ENCODE measurements at regions of chr3 and their contacts with region 1.

Region 1: DNA sequence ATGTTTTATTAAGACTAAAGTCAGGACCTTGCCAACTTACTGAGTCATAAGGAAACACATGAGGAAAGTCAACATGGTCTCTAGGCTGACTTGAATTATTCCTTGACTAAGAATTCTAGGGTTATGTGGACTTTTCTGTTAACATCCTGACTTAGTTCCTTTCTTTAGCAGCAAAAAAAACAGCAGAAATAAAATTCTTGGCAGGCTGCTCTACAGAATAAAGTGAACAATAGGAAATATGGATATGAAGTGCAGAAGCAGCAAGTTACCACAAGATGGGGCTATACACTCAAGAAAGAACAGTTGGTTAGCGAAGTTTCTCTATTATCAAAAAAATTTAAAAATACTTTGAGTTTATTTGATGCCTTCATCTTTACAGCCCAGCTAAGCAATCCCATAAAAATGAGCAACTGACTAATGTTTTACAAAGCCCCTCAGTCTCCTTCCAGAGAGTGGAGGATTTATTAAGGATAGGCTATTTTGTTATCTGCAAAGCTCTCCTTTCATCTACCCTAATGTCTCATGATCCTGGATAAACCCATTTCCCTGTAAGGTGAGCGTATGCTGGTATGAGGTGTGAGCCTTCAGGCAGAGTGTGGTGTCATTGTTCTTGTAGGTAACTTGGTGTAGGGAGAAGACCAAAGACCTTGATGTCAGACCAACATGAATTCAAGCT is 23.1 kb upstream of the MCCC1 start:
- DNase-seq: no peak
- ATAC-seq: peak; percentile 61
- H3K4me3 Mint-ChIP-seq: no peak overlapping the region
- H3K27ac Mint-ChIP-seq: no peak overlapping the region
- H3K4me1 Mint-ChIP-seq: peaks cover 2% of the 10 kb centered on the region
- H3K27me3 Mint-ChIP-seq: peaks cover 32% of the 10 kb centered on the region
- CTCF ChIP-seq: peak; percentile 76

Region 2: DNA sequence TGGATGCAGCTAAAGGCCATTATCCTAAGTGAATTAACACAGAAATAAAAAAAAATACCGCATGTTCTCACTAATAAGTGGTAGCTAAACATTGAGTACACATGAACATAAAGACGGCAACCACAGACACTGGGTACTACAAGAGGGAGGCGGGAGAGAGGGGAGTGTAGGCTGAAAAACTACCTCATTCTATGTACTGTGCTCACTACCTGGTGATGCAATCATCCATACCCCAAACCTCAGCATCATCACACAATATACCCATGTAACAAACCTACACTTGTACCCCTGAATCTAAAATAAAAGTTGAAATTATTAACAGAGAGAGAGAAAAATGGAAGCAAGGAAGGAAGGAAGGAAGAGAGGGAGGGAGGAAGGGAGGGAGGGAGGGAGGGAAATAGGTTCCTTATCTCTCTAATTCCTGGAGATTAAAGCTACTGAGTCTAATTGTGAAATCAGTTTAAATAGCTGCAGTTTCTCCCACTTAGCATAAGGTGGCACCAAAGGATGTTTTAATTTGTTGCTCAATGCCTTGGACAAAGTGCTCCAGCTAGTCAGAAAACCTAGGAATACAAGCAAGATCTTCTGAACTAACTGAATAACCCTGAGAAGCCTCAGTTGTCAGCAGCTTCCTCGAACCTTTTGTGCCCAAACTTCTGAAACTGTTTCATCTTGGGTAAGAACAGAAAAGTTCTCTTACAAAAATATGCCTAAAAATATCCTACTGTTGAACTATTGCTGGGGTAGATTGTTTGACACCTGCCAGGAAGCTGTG is 408.5 kb before region 1 on chr3:
- CTCF ChIA-PET with region 1: interaction called, 5 read pairs
- POLR2A ChIA-PET with region 1: no interaction called
- intact Hi-C with region 1: loop called (anchors 10 kb)
- DNase-seq: no peak
- ATAC-seq: peak; percentile 58
- H3K4me3 Mint-ChIP-seq: no peak overlapping the region
- H3K27ac Mint-ChIP-seq: no peak overlapping the region
- H3K4me1 Mint-ChIP-seq: peaks cover 5% of the 10 kb centered on the region
- H3K27me3 Mint-ChIP-seq: peaks cover 5% of the 10 kb centered on the region
- CTCF ChIP-seq: no peak

Region 3: GRCh38 chr3:182760576-182761164 is 361.7 kb before region 1 on chr3:
- CTCF ChIA-PET with region 1: no interaction called
- POLR2A ChIA-PET with region 1: no interaction called
- intact Hi-C with region 1: no loop called
- DNase-seq: no peak
- ATAC-seq: no peak
- H3K4me3 Mint-ChIP-seq: no peak overlapping the region
- H3K27ac Mint-ChIP-seq: no peak overlapping the region
- H3K4me1 Mint-ChIP-seq: no peaks in the 10 kb centered on the region
- H3K27me3 Mint-ChIP-seq: peaks cover 15% of the 10 kb centered on the region
- CTCF ChIP-seq: no peak

Region 4: DNA sequence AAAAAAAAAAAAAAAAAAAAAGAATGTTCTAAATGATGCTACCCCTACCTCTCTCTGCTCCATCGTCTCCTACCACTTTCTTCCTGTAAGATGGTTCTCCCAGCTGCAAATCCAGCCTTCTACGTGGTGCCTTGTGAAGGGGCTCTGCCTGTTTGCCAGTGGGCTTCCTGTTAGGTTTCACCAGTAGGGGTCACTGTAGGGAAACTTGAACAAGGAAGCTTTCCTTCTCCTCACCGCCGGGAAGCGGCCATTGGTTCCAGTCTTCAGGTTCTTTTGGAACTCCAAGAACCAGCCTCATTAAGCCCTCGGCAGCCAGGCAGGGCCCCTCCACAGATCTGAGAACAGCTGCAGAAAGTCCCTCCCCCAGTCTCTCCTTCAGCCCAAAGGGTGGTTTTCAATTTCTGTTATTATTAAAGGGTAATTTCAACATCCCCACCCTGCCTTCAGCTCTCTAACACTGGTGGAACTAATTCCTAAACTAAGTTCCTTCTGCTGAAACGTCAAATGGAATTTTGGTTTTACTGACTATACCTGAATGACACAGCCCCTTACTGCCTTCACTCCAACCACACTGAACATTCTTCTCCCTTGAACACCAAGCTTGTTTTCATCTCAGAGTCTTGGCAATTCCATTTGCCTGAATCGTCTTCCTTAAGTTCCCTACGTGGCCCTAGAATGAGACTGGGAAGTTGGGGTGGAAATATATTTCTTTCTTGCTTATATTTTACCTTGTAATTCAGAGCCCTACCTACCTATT is 36.6 kb before region 1 on chr3:
- CTCF ChIA-PET with region 1: no interaction called
- POLR2A ChIA-PET with region 1: no interaction called
- intact Hi-C with region 1: no loop called
- DNase-seq: no peak
- ATAC-seq: no peak
- H3K4me3 Mint-ChIP-seq: no peak overlapping the region
- H3K27ac Mint-ChIP-seq: no peak overlapping the region
- H3K4me1 Mint-ChIP-seq: no peaks in the 10 kb centered on the region
- H3K27me3 Mint-ChIP-seq: no peaks in the 10 kb centered on the region
- CTCF ChIP-seq: no peak

Region 5: DNA sequence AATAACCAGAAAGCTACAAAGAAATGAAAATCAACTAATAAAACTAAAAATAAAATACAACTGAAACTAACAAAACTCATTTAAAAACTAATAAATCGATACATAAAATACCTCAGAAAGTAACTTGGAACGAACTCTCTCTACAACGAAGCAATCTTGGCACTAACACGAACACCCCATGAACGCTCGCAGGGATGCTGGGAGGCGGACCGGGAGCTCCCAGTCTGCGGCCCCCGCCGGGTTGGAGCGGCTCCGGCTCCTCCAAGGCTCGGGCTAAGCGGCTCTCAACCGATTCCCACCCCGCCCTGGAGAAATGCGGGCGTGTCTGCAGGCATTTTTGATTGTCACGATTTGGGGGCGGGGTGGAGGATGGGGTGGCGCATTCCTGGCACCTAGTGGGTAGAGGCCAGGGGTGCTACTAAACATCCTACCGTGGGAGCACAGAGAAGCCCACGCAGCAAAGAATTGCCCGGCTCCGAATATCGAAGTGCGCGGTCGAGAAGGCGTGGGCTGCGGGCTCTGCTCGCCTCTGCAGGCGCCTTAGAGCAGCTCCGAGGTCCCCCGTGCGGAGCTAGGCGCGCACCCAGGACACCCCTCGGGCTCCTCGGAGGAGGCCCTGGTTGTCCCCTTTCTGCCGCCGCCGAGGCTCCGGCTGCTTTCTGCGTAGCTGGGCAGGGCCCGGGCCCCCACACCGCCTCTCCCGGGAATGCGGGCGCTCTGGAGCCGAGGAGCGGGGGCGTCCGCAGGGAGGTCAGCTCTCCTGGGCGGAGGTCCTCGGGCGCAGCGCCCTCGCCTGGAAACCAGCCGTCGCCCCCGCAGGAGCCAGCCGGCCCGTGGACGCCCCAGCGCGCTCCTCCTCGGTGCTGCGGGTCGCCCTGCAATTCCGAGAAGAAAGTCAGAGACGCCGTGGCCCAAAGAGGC is 56.5 kb after region 1 on chr3:
- CTCF ChIA-PET with region 1: interaction called, 28 read pairs
- POLR2A ChIA-PET with region 1: no interaction called
- intact Hi-C with region 1: loop called (anchors 1 kb)
- DNase-seq: no peak
- ATAC-seq: peak; percentile 61
- H3K4me3 Mint-ChIP-seq: peak overlapping the region; percentile 46
- H3K27ac Mint-ChIP-seq: no peak overlapping the region
- H3K4me1 Mint-ChIP-seq: peaks cover 12% of the 10 kb centered on the region
- H3K27me3 Mint-ChIP-seq: peaks cover 60% of the 10 kb centered on the region
- CTCF ChIP-seq: no peak

Region 6: DNA sequence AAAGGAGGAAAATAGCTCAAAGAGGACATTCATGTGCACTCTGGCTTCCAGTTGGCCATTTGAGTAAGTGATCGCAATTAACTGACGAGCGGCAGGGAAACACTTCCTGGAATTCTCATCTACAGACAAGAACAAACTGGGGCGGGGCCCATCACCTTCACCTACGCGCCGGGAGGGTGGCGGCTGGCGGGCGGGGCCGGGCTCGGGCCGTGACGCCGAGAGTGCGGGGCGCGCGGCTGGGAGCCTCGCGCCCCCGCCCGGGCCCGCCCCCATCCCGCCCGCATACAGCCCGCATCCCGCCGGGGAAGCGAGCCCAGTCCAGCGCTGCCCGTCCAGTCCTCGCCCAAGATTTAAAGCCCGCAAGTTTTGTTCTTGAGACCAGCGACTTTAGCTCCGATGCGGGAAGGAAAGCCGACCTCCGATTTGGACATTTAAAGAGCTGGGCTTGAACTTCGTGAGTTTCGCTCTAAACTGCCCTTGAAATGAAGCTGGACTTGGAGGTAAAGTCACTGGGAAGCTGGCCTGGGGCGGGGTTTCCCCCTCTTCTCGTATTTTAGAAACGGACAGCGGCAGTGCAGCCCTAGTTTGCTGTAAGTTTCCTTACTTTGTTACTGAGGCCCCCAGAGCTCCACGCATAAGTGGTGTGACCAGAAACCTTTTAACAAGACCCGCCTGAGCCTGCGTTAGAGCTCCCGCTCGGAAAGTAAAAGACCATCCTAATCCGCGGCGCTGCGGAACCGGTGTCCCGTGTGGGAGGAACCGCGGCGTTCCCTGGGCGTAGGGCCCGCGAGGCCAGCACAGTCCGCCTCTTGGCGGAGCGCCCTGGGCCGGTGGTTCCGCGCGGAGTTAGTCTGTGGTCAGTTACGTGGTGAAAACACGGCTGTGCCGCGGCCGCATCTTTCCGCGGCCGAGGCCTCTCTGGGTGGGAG is 130.8 kb after region 1 on chr3 and contains the start of gene B3GNT5:
- CTCF ChIA-PET with region 1: interaction called, 3 read pairs
- POLR2A ChIA-PET with region 1: no interaction called
- intact Hi-C with region 1: loop called (anchors 10 kb)
- DNase-seq: peak; percentile 35
- ATAC-seq: peak; percentile 59
- H3K4me3 Mint-ChIP-seq: peak within 1 kb of the TSS; percentile 78
- H3K27ac Mint-ChIP-seq: no peak within 1 kb of the TSS
- H3K4me1 Mint-ChIP-seq: peaks cover 4% of the 10 kb centered on the region
- H3K27me3 Mint-ChIP-seq: peaks cover 40% of the 10 kb centered on the region
- CTCF ChIP-seq: no peak
- total RNA-seq, gene B3GNT5: 0.37 and 0.38 TPM in 2 replicates

Region 7: DNA sequence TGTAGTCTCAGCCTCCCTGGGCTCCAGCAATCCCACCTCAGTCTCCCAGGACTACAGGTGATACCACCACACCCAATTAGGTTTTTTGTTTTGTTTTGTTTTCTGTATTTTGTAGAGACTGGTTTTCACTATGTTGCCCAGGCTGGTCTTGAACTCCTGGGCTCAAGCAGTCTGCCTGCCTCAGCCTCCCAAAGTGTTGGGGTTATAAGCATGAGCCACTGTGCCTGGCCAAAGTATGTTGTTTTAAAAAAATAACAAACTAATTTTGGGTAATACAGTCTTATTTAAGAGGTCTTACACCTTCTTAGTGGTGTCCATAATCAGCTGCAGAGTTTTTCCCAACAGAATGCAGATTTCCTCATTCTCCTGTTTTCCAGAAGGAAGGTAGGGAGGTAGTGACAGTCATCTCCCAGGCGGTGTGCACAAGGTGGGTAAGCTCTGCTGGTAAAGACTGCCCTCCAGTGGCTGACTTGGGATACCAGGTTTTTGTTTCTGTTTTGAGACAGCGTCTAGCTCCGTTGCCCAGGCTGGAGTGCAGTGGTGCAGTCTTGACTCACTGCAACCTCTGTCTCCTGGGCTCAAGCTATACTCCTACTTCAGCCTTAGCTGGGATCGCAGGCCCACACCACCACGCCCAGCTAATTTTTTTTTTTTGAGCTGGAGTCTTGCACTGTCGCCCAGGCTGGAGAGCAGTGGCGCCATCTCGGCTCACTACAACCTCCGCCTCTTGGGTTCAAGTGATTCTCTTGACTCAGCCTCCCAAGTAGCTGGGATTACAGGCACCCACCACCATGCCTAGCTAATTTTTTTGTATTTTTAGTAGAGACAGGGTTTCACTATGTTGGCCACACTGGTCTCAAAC is 644.6 kb after region 1 on chr3:
- CTCF ChIA-PET with region 1: interaction called, 7 read pairs
- POLR2A ChIA-PET with region 1: no interaction called
- intact Hi-C with region 1: loop called (anchors 1 kb)
- DNase-seq: peak; percentile 32
- ATAC-seq: peak; percentile 86
- H3K4me3 Mint-ChIP-seq: no peak overlapping the region
- H3K27ac Mint-ChIP-seq: no peak overlapping the region
- H3K4me1 Mint-ChIP-seq: peaks cover 9% of the 10 kb centered on the region
- H3K27me3 Mint-ChIP-seq: no peaks in the 10 kb centered on the region
- CTCF ChIP-seq: no peak

Measured in activated B cell treated with CpG ODN at 0.5 μM for 24 hours (primary cell).